Posterior cingulate gyrus (tissue), 11 donors: ENCODE measurements at regions of chr10 and their contacts with region 1.

Region 1: GRCh38 chr10:45008524-45009161 is 7.9 kb downstream of the ZNF22 start:
- DNase-seq: peak in 2 of 10 donors; percentile 2 to 75

Region 2: GRCh38 chr10:45235798-45236231 is 227.2 kb after region 1 on chr10:
- intact Hi-C with region 1: loop called (anchors 10 kb)
- DNase-seq: peak in 1 of 10 donors; percentile 64